ENCODE measurements at regions of chr6 and their contacts with region 1.

Region 1: DNA sequence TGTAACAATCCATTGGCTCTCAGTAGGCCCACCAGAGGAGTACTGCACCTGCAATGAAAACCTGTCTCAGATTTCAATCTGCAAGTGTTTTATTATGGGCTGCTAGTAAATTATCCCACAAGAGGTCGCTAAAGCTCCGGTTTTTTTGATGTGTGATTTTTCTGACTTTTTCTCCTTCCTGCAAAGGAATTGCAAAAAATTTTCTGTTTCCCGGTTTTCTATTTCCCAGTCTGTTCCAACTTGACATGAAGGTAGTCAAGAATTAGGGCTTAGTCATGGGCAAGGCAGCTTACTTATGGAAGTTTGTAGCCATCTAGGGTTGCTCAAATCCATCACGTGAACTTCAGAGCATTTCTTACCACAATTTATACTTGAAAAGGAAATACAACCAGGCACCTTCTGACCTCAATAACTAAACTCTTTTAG is 38.5 kb upstream of the AHI1 start:
- DNase-seq: no peak
- ATAC-seq: peak in 1 of 2 donors; percentile 35
- H3K4me3 ChIP-seq: no peak overlapping the region
- H3K27ac ChIP-seq: no peak overlapping the region
- H3K4me1 ChIP-seq: no peaks in the 10 kb centered on the region
- H3K27me3 ChIP-seq: no peaks in the 10 kb centered on the region

Region 2: DNA sequence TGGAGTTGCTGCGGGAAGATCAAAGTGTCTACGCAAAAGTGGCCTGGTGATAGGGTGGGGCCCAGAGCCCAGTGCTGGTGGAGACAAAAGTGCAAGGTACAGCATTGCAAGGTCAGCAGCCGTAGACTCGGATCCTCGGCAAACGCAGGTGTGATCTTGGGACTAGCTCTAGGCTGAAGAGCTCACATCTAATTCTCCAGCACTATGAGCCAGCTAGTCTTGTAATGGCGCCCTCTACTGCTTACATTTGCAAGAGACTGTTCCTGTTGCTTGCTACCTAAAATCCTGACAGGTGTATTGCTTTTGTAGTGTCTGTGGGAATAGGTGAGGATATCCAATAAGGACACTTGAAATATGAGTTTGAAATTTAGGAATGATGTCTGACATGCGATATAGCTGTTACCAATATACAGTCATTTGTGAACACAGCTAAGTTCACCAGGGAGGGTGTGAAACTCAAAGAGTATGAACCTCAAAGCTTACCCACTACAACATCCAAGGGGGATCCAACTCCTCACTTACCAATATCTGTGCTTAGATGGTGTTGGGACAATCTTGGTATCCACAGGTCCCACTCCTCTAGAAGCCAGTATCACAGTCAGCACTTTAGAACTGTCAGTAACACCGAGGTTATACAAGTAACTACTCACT is 373.9 kb after region 1 on chr6:
- intact Hi-C with region 1: loop called in 1 of 4 experiments (anchors 10 kb)
- DNase-seq: no peak
- ATAC-seq: peak; percentile 25 to 38
- H3K4me3 ChIP-seq: no peak overlapping the region
- H3K27ac ChIP-seq: no peak overlapping the region
- H3K4me1 ChIP-seq: no peaks in the 10 kb centered on the region
- H3K27me3 ChIP-seq: no peaks in the 10 kb centered on the region

Region 3: GRCh38 chr6:135938576-135939207 is 402.7 kb after region 1 on chr6:
- intact Hi-C with region 1: loop called in 1 of 4 experiments (anchors 10 kb)
- DNase-seq: peak; percentile 40 to 82 (median 52)
- ATAC-seq: peak; percentile 86 to 89
- H3K4me3 ChIP-seq: no peak overlapping the region
- H3K27ac ChIP-seq: no peak overlapping the region
- H3K4me1 ChIP-seq: peaks cover 2% of the 10 kb centered on the region
- H3K27me3 ChIP-seq: no peaks in the 10 kb centered on the region

Region 4: GRCh38 chr6:136317021-136317694 is 781.2 kb after region 1 on chr6:
- intact Hi-C with region 1: loop called in 2 of 4 experiments (anchors 10 kb)
- DNase-seq: peak in 1 of 3 donors; percentile 36
- ATAC-seq: peak; percentile 71 to 78
- H3K4me3 ChIP-seq: no peak overlapping the region
- H3K27ac ChIP-seq: no peak overlapping the region
- H3K4me1 ChIP-seq: no peaks in the 10 kb centered on the region
- H3K27me3 ChIP-seq: no peaks in the 10 kb centered on the region